Heart right ventricle (tissue), 16 donors: ENCODE measurements at regions of chr16 and their contacts with region 1.

Region 1: GRCh38 chr16:3234543-3235541 is at the start of gene ZNF200:
- DNase-seq: peak; percentile 96 to 97
- ATAC-seq: peak; percentile 99 to 100 (median 99)
- H3K4me3 ChIP-seq: peak within 1 kb of the TSS; percentile 68 to 95 (median 84)
- H3K27ac ChIP-seq: peak within 1 kb of the TSS; percentile 85 to 99 (median 96)
- H3K4me1 ChIP-seq: peaks cover 4 to 19% (median 14%) of the 10 kb centered on the region in 9 donors
- H3K27me3 ChIP-seq: no peaks in the 10 kb centered on the region
- CTCF ChIP-seq: no peak
- total RNA-seq, gene ZNF200: 4.6 to 8.9 (median 6.1) TPM

Region 2: DNA sequence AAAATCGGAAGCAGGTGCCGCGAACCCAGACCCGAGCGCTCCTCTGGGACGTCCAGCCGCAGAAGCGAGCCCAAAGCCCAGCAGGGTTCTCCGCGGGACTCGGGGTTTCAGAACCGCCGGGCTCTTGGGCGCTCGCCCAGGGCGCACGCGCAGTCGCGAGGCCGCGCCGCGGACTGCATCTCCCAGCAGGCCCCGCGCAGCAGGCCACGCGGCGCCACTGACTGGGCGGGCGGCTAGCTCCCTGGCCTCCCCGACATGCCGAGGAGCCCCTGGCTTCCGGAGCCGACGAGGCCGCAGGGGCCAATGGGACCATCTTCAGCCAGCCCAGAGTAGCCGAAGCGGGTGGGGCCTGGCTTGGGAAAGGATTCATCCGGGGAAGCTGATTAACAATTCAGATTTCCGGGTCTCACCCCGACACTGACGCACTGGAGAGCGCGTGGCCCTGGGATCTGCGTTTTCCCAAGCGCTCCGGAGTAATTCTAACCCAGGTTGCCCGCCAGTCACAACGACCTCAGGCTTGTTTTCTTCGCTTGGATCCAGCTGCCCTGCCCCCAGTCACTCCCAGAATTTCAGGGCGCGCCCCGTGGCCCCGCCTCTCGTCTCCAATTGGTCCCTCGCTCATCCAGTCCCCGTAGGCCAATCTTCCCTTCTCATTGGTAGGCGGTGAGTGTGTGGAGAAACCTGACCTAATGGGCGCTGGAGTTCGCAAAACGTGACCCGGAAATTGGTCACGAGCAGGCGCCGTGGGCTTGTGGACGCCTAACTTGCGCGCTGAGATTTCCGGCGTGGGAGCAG is 48.1 kb after region 1 on chr16 and contains the start of gene ZNF263:
- intact Hi-C with region 1: loop called in 1 of 10 experiments (anchors 10 kb)
- DNase-seq: peak; percentile 94 to 97
- ATAC-seq: peak; percentile 94 to 98 (median 96)
- H3K4me3 ChIP-seq: peak within 1 kb of the TSS; percentile 75 to 100 (median 95)
- H3K27ac ChIP-seq: peak within 1 kb of the TSS; percentile 98 to 99 (median 99)
- H3K4me1 ChIP-seq: peaks cover 9 to 32% (median 26%) of the 10 kb centered on the region in 9 donors
- H3K27me3 ChIP-seq: no peaks in the 10 kb centered on the region
- CTCF ChIP-seq: no peak
- total RNA-seq, gene ZNF263: 7.2 to 13.2 (median 9.2) TPM

Region 3: GRCh38 chr16:3364774-3365427 is 130.1 kb after region 1 on chr16:
- intact Hi-C with region 1: loop called in 1 of 10 experiments (anchors 10 kb)
- DNase-seq: peak; percentile 88
- ATAC-seq: peak; percentile 99 to 100 (median 100)
- H3K4me3 ChIP-seq: peak overlapping the region; percentile 46 to 67 (median 60)
- H3K27ac ChIP-seq: peak overlapping the region; percentile 67 to 92 (median 89)
- H3K4me1 ChIP-seq: peaks cover 0 to 8% (median 0%) of the 10 kb centered on the region in 9 donors
- H3K27me3 ChIP-seq: peaks cover 0 to 17% (median 3%) of the 10 kb centered on the region in 7 donors
- CTCF ChIP-seq: no peak